ENCODE measurements at regions of chr1 and their contacts with region 1.

Region 1: DNA sequence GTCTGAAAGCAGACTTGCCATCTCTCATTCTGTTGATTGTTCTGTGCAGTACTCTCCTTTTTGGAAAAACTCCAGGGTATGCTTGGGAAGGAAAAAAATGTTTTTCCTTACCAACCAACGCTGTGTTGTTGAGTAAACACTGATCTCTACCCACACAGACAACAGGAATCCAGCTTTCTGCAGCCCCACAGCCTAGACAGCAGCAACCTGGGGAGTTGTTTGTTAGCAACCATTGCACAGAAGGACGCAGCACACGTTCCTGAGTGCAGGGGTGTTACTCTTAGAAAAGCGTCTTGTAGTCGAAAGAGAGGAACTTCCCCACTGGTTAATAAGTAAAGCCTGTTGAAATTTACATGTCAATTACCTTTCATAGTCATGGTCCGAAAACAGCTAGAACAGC is 56.6 kb downstream of the SMYD2 start:
- DNase-seq: no peak
- ATAC-seq: peak in 7 of 8 donors; percentile 43 to 73 (median 52)
- H3K4me3 ChIP-seq: no peak overlapping the region
- H3K27ac ChIP-seq: peak overlapping the region in 9 of 10 donors; percentile 32 to 88 (median 80)
- H3K4me1 ChIP-seq: peaks cover 4 to 58% (median 18%) of the 10 kb centered on the region in 9 donors
- H3K27me3 ChIP-seq: no peaks in the 10 kb centered on the region
- CTCF ChIP-seq: no peak

Region 2: DNA sequence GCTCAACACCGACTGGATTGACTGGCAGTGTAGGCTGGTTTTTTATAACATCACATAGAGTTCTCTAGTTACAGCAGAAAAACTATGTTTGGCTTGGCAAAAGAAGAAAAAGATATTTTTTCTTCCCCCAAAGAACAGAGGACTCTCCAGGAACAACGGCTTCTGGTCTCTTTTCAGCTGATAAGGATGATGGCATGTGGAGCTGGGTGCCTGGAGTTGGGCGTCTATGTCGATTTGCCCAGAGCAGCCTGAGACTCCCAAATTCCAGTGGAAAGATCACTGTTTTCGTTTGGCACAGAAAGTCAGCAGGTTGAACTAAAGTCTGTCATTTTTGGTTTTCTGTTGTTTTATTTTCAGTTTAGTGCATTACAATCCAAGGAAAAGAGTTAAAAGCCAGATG is 34.6 kb after region 1 on chr1:
- intact Hi-C with region 1: loop called in 1 of 10 experiments (anchors 5 kb)
- DNase-seq: no peak
- ATAC-seq: peak in 4 of 8 donors; percentile 55 to 75 (median 64)
- H3K4me3 ChIP-seq: no peak overlapping the region
- H3K27ac ChIP-seq: peak overlapping the region in 6 of 10 donors; percentile 11 to 71 (median 66)
- H3K4me1 ChIP-seq: peaks cover 0 to 33% (median 20%) of the 10 kb centered on the region in 9 donors
- H3K27me3 ChIP-seq: no peaks in the 10 kb centered on the region
- CTCF ChIP-seq: no peak

Measured in heart right ventricle (tissue), 16 donors.